Kidney (tissue), 22 donors: ENCODE measurements at regions of chr1 and their contacts with region 1.

Region 1: DNA sequence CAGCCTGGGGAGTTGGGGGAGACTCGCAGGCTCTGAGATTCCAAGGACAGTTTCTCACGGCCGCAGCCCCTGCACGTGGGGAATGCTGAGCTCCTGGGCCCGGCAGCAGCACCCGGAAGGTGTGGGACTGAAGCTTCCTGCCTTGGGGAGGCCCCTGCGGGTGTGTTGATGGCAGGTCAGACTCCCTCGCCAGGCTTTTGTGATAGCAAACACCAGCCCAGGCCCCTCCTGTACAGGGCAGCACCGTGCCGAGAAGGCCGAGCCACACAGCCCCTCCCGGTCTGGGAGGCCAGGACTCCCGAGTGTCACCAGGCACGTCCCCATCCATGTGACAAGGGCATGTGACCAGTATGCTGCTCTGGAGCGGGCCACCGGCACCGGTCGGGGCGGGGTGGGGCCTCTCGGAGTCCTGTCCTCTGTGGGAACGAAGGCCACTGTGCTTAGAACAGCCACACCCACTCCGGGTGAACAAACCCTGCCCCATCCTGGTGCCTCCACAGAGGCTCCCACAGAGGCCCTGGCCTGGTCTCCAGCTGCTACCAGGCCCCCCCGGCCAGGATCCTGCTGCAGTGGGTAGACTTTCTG is 31.1 kb upstream of the ARHGEF16 start:
- DNase-seq: peak in 3 of 5 donors; percentile 23 to 88 (median 55)
- H3K4me3 ChIP-seq: no peak overlapping the region
- H3K27ac ChIP-seq: peak overlapping the region; percentile 57 to 60
- H3K4me1 ChIP-seq: peaks cover 4 to 15% (median 4%) of the 10 kb centered on the region in 3 donors
- H3K27me3 ChIP-seq: peaks cover 7% of the 10 kb centered on the region
- CTCF ChIP-seq: no peak

Region 2: GRCh38 chr1:3012456-3013291 is 410.7 kb before region 1 on chr1:
- intact Hi-C with region 1: loop called (anchors 10 kb)
- DNase-seq: peak in 4 of 5 donors; percentile 70 to 82 (median 80)
- H3K4me3 ChIP-seq: no peak overlapping the region
- H3K27ac ChIP-seq: no peak overlapping the region
- H3K4me1 ChIP-seq: no peaks in the 10 kb centered on the region
- H3K27me3 ChIP-seq: peaks cover 2% of the 10 kb centered on the region
- CTCF ChIP-seq: peak; percentile 44

Region 3: GRCh38 chr1:3598051-3598491 is 174.7 kb after region 1 on chr1:
- intact Hi-C with region 1: no loop called
- DNase-seq: peak in 3 of 5 donors; percentile 56 to 78 (median 57)
- H3K4me3 ChIP-seq: no peak overlapping the region
- H3K27ac ChIP-seq: no peak overlapping the region
- H3K4me1 ChIP-seq: no peaks in the 10 kb centered on the region
- H3K27me3 ChIP-seq: no peaks in the 10 kb centered on the region
- CTCF ChIP-seq: no peak